CD4-positive, alpha-beta memory T cell (primary cell): ENCODE measurements at regions of chr1 and their contacts with region 1.

Region 1: DNA sequence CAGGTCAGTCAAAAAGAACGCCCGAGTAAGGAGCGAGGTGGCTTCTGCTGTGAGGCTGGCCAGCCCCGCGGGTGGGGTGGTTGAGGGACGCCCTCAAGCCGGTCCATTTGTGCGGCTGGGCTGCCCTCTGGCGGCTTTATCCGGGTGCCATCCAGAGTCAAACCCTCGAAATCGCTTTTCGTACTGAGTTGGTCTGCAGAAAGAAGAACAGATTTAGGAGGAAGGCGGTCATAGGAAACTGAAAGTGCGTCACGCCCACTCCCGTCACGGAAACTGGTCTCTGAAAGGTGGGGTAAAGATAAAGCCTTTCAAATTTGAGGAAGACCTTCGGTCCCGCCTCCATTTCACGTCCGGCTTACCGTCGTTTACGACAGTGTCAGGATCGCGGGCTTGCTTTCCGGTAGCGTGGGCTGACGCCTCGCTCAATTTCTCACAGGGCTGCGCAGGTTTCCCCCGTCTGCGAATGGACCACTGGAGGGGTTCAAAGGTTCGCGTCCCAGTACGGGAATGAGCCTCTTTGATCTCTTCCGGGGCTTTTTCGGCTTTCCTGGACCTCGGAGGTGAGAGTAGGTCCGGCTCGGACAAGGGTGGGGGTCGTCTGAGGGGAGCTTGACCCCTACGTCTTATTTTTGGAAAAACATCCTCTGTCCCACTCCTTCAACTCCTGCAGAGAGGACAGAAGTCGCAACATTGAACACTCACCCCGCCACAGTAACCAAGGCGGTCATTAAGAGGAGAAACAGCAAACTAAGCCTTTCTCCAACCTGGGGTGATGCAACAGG is at the start of gene HAX1:
- DNase-seq: peak; percentile 93 to 99 (median 98)
- H3K4me3 ChIP-seq: peak within 1 kb of the TSS; percentile 66 to 85
- H3K4me3 Mint-ChIP-seq: peak within 1 kb of the TSS; percentile 89 to 98 (median 97)
- H3K27ac ChIP-seq: peak within 1 kb of the TSS; percentile 88
- H3K27ac Mint-ChIP-seq: peak within 1 kb of the TSS; percentile 97 to 99 (median 99)
- H3K4me1 ChIP-seq: peaks cover 27% of the 10 kb centered on the region
- H3K4me1 Mint-ChIP-seq: peaks cover 22 to 38% (median 29%) of the 10 kb centered on the region in 4 donors
- H3K27me3 ChIP-seq: no peaks in the 10 kb centered on the region
- H3K27me3 Mint-ChIP-seq: no peaks in the 10 kb centered on the region
- total RNA-seq, gene HAX1: 110 to 121 TPM

Region 2: DNA sequence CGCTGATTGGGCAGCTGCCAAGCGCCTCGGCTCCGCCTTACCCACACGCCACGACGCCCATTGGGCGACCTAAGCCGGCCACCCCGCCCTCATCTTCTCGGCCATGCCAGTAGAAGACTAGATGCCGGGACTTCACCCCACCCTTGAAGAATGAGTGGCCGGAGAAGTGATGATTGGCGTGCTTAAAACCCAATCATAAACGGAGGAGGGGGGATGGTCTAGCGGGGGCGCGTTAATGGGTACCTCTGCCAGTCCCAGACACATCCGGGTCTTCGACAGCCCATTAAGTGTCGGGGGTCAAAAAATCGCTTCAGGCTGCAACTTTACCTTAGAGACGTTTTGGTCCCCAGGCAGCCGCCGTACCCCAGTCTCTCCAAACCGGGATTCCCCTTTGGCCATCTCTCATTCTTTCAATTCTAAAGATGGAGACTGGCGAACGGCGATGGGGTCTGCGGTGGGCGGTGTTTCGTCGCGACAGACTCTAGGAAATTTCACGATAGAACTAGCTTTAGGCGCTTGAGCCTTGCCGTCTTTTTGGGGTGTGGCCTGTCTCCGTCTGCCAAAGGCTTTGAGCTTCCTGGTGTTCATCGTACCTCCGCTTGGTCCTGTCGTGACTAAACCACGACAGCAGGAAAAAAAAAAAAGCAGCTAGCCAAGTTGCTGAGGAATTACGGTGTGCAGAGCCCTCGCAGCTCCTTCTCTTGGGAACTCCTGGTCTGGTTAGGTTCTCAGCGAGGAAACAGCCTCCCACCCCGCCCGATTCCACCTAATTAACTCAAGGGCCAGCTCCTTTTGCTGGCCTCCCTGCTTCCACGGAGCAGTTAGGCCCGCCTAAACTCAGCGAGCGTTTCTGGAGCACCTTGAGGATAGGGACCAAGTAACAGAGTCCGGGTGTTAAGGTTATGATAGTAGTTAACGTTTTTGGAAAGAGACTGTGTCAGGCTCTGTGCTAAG is 349.2 kb before region 1 on chr1 and contains the start of gene GATAD2B:
- CTCF ChIA-PET with region 1: no interaction called
- POLR2A ChIA-PET with region 1: no interaction called
- intact Hi-C with region 1: loop called (anchors 5 kb)
- DNase-seq: peak; percentile 99 to 100 (median 100)
- H3K4me3 ChIP-seq: peak within 1 kb of the TSS; percentile 80 to 99
- H3K4me3 Mint-ChIP-seq: peak within 1 kb of the TSS; percentile 94 to 97 (median 95)
- H3K27ac ChIP-seq: peak within 1 kb of the TSS; percentile 97
- H3K27ac Mint-ChIP-seq: peak within 1 kb of the TSS; percentile 96 to 99 (median 97)
- H3K4me1 ChIP-seq: peaks cover 44% of the 10 kb centered on the region
- H3K4me1 Mint-ChIP-seq: peaks cover 34 to 55% (median 43%) of the 10 kb centered on the region in 4 donors
- H3K27me3 ChIP-seq: no peaks in the 10 kb centered on the region
- H3K27me3 Mint-ChIP-seq: no peaks in the 10 kb centered on the region
- total RNA-seq, gene GATAD2B: 97.0 to 104 TPM

Region 3: DNA sequence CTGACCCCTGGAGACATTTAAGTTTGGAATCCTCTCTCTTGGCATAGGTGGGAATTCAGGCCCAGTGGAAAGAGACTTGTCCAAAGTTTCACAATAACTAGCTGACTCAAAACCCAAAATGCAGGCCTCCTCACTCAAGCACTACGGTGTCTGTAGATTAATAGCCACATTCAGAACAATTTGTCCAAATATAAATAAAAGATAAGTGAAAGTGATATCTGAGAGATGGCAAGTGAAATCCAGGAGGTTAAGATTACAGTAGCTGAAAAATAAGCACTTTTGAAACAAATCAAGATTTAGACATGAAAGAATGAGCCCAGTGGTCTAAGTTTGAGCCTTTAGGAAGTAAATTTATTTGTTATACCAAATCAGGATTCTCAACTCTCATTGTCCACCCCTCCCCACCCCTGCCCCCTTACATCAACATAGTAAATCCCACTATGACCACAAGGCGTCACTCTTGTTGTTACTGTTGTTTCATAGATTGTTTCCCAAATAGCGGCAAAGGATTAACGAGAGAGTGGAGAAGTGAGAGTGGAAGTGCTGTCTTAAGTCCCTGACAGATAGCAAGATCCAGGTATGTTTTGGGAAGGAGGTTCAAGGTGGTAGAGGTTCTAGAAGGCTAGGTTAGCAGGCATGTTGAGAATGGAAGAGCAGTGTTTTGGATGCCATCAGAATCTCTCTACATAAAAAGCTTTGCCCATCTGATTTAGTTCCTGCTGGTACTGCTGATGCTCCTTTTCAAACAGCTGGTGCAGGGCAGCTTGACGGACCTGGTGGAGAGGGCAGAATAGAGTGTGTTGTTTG is 73.4 kb before region 1 on chr1:
- CTCF ChIA-PET with region 1: interaction called, 30 read pairs
- POLR2A ChIA-PET with region 1: interaction called, 18 read pairs
- intact Hi-C with region 1: loop called (anchors 1 kb)
- DNase-seq: peak; percentile 53 to 62 (median 58)
- H3K4me3 ChIP-seq: no peak overlapping the region
- H3K4me3 Mint-ChIP-seq: no peak overlapping the region
- H3K27ac ChIP-seq: no peak overlapping the region
- H3K27ac Mint-ChIP-seq: peak overlapping the region in 2 of 7 donors; percentile 64 to 74
- H3K4me1 ChIP-seq: peaks cover 7% of the 10 kb centered on the region
- H3K4me1 Mint-ChIP-seq: no peaks in the 10 kb centered on the region
- H3K27me3 ChIP-seq: no peaks in the 10 kb centered on the region
- H3K27me3 Mint-ChIP-seq: peaks cover 0 to 3% of the 10 kb centered on the region in 2 donors

Region 4: GRCh38 chr1:154324669-154325582 is 52.5 kb after region 1 on chr1 and contains the start of gene ATP8B2:
- CTCF ChIA-PET with region 1: interaction called, 12 read pairs
- POLR2A ChIA-PET with region 1: interaction called, 8 read pairs
- intact Hi-C with region 1: loop called (anchors 1 kb)
- DNase-seq: peak; percentile 79 to 85 (median 81)
- H3K4me3 ChIP-seq: peak within 1 kb of the TSS; percentile 61 to 66
- H3K4me3 Mint-ChIP-seq: peak within 1 kb of the TSS; percentile 93 to 99 (median 98)
- H3K27ac ChIP-seq: peak within 1 kb of the TSS; percentile 89
- H3K27ac Mint-ChIP-seq: peak within 1 kb of the TSS; percentile 86 to 98 (median 96)
- H3K4me1 ChIP-seq: peaks cover 41% of the 10 kb centered on the region
- H3K4me1 Mint-ChIP-seq: peaks cover 22 to 49% (median 32%) of the 10 kb centered on the region in 4 donors
- H3K27me3 ChIP-seq: no peaks in the 10 kb centered on the region
- H3K27me3 Mint-ChIP-seq: no peaks in the 10 kb centered on the region
- total RNA-seq, gene ATP8B2: 186 TPM

Region 5: DNA sequence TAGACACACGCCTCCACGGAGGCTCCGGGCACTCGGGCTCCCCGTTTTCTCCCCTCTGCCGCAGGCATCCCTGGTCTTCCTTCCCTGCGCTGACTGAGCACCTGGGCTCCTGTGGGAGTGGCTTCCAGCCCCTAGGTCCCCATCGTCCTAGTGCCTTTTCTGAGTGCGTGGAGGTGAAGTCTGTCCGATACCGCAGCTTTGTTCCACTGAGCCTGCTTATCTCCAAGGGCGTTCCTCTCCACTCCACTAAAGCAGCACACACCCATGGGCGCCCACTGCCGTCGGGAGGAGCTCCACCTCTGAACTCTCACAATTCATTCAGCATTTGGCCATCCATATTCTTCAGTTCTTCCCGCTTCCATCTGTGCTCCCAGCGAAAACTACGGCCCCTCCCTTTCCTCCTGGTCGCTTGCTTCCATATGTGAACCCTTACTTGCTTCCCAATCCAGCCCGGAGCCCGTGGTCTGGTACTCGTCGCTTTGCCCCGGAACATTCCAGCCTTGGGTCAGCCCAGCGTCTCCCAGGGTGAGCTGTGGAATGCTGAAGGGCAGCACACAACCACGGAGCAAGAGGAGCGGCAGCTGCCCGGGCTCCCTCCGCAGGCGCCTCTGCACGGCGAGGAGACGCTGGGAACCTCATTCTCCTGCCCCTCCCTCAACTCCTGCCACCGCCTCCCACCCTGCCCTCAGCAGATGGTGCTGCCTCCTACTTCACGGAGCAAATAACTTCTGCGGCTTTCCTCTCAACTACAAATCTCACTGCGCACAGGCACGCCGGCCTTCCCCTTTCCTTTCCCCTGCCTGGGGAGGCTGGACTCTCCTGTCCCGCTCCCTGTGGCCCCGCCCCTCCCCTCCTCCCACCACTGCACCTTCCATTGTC is 80.4 kb after region 1 on chr1:
- CTCF ChIA-PET with region 1: interaction called, 15 read pairs
- POLR2A ChIA-PET with region 1: interaction called, 6 read pairs
- intact Hi-C with region 1: loop called (anchors 2 kb)
- DNase-seq: peak; percentile 44 to 68 (median 48)
- H3K4me3 ChIP-seq: peak overlapping the region; percentile 69 to 77
- H3K4me3 Mint-ChIP-seq: peak overlapping the region; percentile 84 to 95 (median 92)
- H3K27ac ChIP-seq: peak overlapping the region; percentile 51
- H3K27ac Mint-ChIP-seq: peak overlapping the region; percentile 38 to 96 (median 90)
- H3K4me1 ChIP-seq: peaks cover 54% of the 10 kb centered on the region
- H3K4me1 Mint-ChIP-seq: peaks cover 30 to 61% (median 44%) of the 10 kb centered on the region in 4 donors
- H3K27me3 ChIP-seq: no peaks in the 10 kb centered on the region
- H3K27me3 Mint-ChIP-seq: no peaks in the 10 kb centered on the region